ENCODE measurements at regions of chrX and their contacts with region 1.

Region 1: GRCh38 chrX:136767104-136767941 is 13.4 kb downstream of the ARHGEF6 start:
- DNase-seq: peak; percentile 73 to 84 (median 80)
- ATAC-seq: peak; percentile 81 to 88 (median 84)
- H3K4me3 ChIP-seq: peak overlapping the region; percentile 47 to 97 (median 70)
- H3K27ac ChIP-seq: peak overlapping the region; percentile 89 to 99 (median 94)
- H3K4me1 ChIP-seq: peaks cover 0 to 28% (median 15%) of the 10 kb centered on the region in 12 donors
- H3K27me3 ChIP-seq: no peaks in the 10 kb centered on the region
- CTCF ChIP-seq: peak in 10 of 12 donors; percentile 8 to 44 (median 28)
- POLR2A ChIP-seq: peak in 1 of 2 donors; percentile 42

Region 2: GRCh38 chrX:136711147-136711546 is 56.2 kb before region 1 on chrX:
- intact Hi-C with region 1: loop called in 3 of 10 experiments (anchors 2 to 5 kb)
- DNase-seq: peak; percentile 25 to 57 (median 47)
- ATAC-seq: peak; percentile 56 to 85 (median 82)
- H3K4me3 ChIP-seq: no peak overlapping the region
- H3K27ac ChIP-seq: peak overlapping the region in 1 of 12 donors; percentile 67
- H3K4me1 ChIP-seq: peaks cover 0 to 26% (median 0%) of the 10 kb centered on the region in 12 donors
- H3K27me3 ChIP-seq: peaks cover 0 to under 1% (median 0%) of the 10 kb centered on the region in 9 donors
- CTCF ChIP-seq: peak in 11 of 12 donors; percentile 21 to 56 (median 45)
- POLR2A ChIP-seq: no peak

Region 3: GRCh38 chrX:136731207-136731782 is 36.0 kb before region 1 on chrX:
- intact Hi-C with region 1: loop called in 1 of 10 experiments (anchors 5 kb)
- DNase-seq: no peak
- ATAC-seq: peak; percentile 60 to 80 (median 72)
- H3K4me3 ChIP-seq: no peak overlapping the region
- H3K27ac ChIP-seq: peak overlapping the region; percentile 35 to 85 (median 66)
- H3K4me1 ChIP-seq: peaks cover 0 to 34% (median 9%) of the 10 kb centered on the region in 12 donors
- H3K27me3 ChIP-seq: peaks cover 0 to 4% (median 0%) of the 10 kb centered on the region in 9 donors
- CTCF ChIP-seq: no peak
- POLR2A ChIP-seq: no peak

Region 4: GRCh38 chrX:136866337-136867095 is 99.2 kb after region 1 on chrX:
- intact Hi-C with region 1: loop called in 3 of 10 experiments (anchors 10 kb)
- DNase-seq: no peak
- ATAC-seq: peak in 2 of 4 donors; percentile 40 to 41
- H3K4me3 ChIP-seq: no peak overlapping the region
- H3K27ac ChIP-seq: peak overlapping the region in 5 of 12 donors; percentile 14 to 46 (median 30)
- H3K4me1 ChIP-seq: peaks cover 0 to 40% (median 6%) of the 10 kb centered on the region in 12 donors
- H3K27me3 ChIP-seq: no peaks in the 10 kb centered on the region
- CTCF ChIP-seq: no peak
- POLR2A ChIP-seq: no peak

Region 5: GRCh38 chrX:136880452-136881013 is 113.2 kb after region 1 on chrX and contains the start of gene RBMX:
- intact Hi-C with region 1: loop called in 3 of 10 experiments (anchors 10 kb)
- DNase-seq: peak; percentile 88 to 94 (median 92)
- ATAC-seq: peak; percentile 95 to 97 (median 96)
- H3K4me3 ChIP-seq: peak within 1 kb of the TSS; percentile 57 to 97 (median 78)
- H3K27ac ChIP-seq: peak within 1 kb of the TSS; percentile 88 to 99 (median 94)
- H3K4me1 ChIP-seq: peaks cover 0 to 11% (median 6%) of the 10 kb centered on the region in 12 donors
- H3K27me3 ChIP-seq: no peaks in the 10 kb centered on the region
- CTCF ChIP-seq: no peak
- POLR2A ChIP-seq: peak; percentile 26 to 92
- total RNA-seq, gene RBMX: 65.0 to 182 (median 90.7) TPM

Region 6: GRCh38 chrX:136909706-136910564 is 142.6 kb after region 1 on chrX:
- intact Hi-C with region 1: loop called in 1 of 10 experiments (anchors 5 kb)
- DNase-seq: peak; percentile 54 to 83 (median 81)
- ATAC-seq: peak; percentile 80 to 89 (median 88)
- H3K4me3 ChIP-seq: peak overlapping the region; percentile 33 to 79 (median 64)
- H3K27ac ChIP-seq: peak overlapping the region; percentile 54 to 87 (median 81)
- H3K4me1 ChIP-seq: peaks cover 0 to 10% (median 0%) of the 10 kb centered on the region in 12 donors
- H3K27me3 ChIP-seq: no peaks in the 10 kb centered on the region
- CTCF ChIP-seq: peak in 1 of 12 donors; percentile 2
- POLR2A ChIP-seq: no peak